ENCODE measurements at regions of chr1 and their contacts with region 1.

Region 1: GRCh38 chr1:205711104-205712020 is 31.1 kb upstream of the SLC45A3 start:
- DNase-seq: peak in 32 of 35 experiments; percentile 12 to 88 (median 48)
- ATAC-seq: peak; percentile 81 to 91 (median 86)
- H3K4me3 ChIP-seq: no peak overlapping the region
- H3K4me3 Mint-ChIP-seq: no peak overlapping the region
- H3K27ac ChIP-seq: no peak overlapping the region
- H3K27ac Mint-ChIP-seq: peak overlapping the region in 1 of 2 donors; percentile 4
- H3K4me1 ChIP-seq: no peaks in the 10 kb centered on the region
- H3K4me1 Mint-ChIP-seq: peaks cover 5 to 17% (median 14%) of the 10 kb centered on the region in 3 donors
- H3K27me3 ChIP-seq: no peaks in the 10 kb centered on the region
- H3K27me3 Mint-ChIP-seq: no peaks in the 10 kb centered on the region

Region 2: DNA sequence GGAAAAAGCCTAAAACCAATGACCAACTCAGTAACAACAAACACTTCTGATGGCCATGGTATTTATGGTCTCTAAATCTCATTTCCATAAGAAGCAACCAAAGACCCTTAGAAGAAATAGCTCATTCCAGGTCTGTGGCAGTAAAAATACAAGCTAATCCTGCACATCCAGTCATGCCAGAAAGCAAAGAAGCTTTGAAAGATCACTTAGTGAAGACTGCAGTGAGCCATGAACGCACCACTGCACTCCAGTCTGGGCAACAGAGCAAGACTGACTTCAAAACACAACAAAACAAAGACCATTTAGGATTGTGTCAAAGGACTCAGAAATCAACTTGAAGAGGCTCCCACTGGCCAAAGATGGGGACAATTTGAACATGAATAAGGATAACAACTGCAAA is 61.1 kb before region 1 on chr1:
- CTCF ChIA-PET with region 1: no interaction called
- POLR2A ChIA-PET with region 1: no interaction called
- DNase-seq: no peak
- ATAC-seq: no peak
- H3K4me3 ChIP-seq: no peak overlapping the region
- H3K4me3 Mint-ChIP-seq: no peak overlapping the region
- H3K27ac ChIP-seq: no peak overlapping the region
- H3K27ac Mint-ChIP-seq: no peak overlapping the region
- H3K4me1 ChIP-seq: no peaks in the 10 kb centered on the region
- H3K4me1 Mint-ChIP-seq: no peaks in the 10 kb centered on the region
- H3K27me3 ChIP-seq: peaks cover 0 to 7% of the 10 kb centered on the region in 2 experiments
- H3K27me3 Mint-ChIP-seq: peaks cover 3 to 4% of the 10 kb centered on the region in 2 donors

Region 3: DNA sequence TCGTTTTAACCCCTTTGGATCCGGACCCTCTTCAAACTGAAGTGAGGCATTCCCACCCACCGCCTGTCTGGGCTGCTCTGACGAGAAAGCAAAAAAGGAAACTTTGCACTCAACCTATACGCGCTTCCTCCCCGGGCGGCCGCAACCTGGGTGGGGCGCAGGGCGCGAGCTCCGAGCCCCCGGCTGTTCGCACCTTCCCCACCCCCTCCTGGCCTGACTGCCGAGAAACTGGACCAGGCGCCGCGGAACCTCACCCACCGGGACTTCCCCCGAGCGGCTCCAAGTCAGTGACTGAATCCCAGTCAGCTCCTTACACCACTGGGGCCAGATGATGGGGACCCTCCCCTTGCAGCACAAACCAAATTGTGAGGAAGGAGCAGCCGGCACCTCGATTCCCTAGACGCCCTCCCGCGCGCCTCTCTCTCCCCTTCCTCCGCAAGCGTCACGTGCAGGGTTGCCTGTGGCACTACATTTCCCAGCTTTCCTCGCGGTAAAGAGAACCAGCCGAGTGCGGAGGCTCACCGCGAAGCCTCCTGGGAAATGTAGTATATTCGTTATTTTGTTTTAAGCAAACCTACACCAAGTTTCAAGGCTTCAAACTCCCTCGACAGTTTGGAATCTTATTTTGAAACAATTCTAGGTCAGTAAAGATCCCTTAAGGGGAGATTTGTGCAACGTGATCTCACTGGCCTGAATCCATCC is 63.8 kb after region 1 on chr1 and contains the start of gene RAB29:
- CTCF ChIA-PET with region 1: interaction called, 3 to 13 read pairs
- POLR2A ChIA-PET with region 1: no interaction called
- DNase-seq: peak; percentile 61 to 93 (median 85)
- ATAC-seq: peak; percentile 91 to 94 (median 92)
- H3K4me3 ChIP-seq: peak within 1 kb of the TSS; percentile 74 to 80
- H3K4me3 Mint-ChIP-seq: peak within 1 kb of the TSS; percentile 84 to 92 (median 85)
- H3K27ac ChIP-seq: peak within 1 kb of the TSS; percentile 93
- H3K27ac Mint-ChIP-seq: peak within 1 kb of the TSS; percentile 95 to 97
- H3K4me1 ChIP-seq: peaks cover 6 to 43% of the 10 kb centered on the region in 2 experiments
- H3K4me1 Mint-ChIP-seq: peaks cover 47 to 66% (median 64%) of the 10 kb centered on the region in 3 donors
- H3K27me3 ChIP-seq: no peaks in the 10 kb centered on the region
- H3K27me3 Mint-ChIP-seq: no peaks in the 10 kb centered on the region
- total RNA-seq, gene RAB29: 32.5 to 64.6 (median 46.8) TPM

Region 4: DNA sequence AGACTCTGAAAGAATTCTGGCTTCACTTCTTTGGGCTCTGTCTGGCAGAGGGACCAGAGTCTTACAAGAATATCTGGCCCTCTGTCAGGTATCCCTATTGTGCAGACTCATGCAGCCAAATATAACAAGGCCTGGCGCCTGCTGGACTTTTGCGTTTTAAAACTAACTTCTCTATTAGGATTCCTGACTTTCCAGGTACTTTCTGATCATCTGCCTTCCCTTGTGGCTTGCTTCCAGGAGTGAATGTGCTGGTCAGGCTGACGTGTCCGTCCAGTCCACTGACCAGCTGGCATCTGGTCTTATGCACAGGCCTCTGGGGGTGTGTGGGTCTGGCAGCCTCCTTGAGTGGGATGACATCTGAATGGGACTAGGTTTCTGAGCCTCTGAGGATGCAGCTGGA is 72.5 kb after region 1 on chr1:
- CTCF ChIA-PET with region 1: interaction called in 1 of 2 experiments, 14 read pairs
- POLR2A ChIA-PET with region 1: no interaction called
- DNase-seq: no peak
- ATAC-seq: no peak
- H3K4me3 ChIP-seq: no peak overlapping the region
- H3K4me3 Mint-ChIP-seq: no peak overlapping the region
- H3K27ac ChIP-seq: no peak overlapping the region
- H3K27ac Mint-ChIP-seq: no peak overlapping the region
- H3K4me1 ChIP-seq: peaks cover 0 to 3% of the 10 kb centered on the region in 2 experiments
- H3K4me1 Mint-ChIP-seq: peaks cover 6 to 9% (median 8%) of the 10 kb centered on the region in 3 donors
- H3K27me3 ChIP-seq: peaks cover 0 to 3% of the 10 kb centered on the region in 2 experiments
- H3K27me3 Mint-ChIP-seq: no peaks in the 10 kb centered on the region

Region 5: GRCh38 chr1:206106328-206107167 is 395.2 kb after region 1 on chr1:
- CTCF ChIA-PET with region 1: no interaction called
- POLR2A ChIA-PET with region 1: no interaction called
- DNase-seq: peak; percentile 40 to 86 (median 66)
- ATAC-seq: peak; percentile 75 to 85 (median 82)
- H3K4me3 ChIP-seq: no peak overlapping the region
- H3K4me3 Mint-ChIP-seq: no peak overlapping the region
- H3K27ac ChIP-seq: no peak overlapping the region
- H3K27ac Mint-ChIP-seq: peak overlapping the region in 1 of 2 donors; percentile 39
- H3K4me1 ChIP-seq: no peaks in the 10 kb centered on the region
- H3K4me1 Mint-ChIP-seq: peaks cover 0 to 12% (median 0%) of the 10 kb centered on the region in 3 donors
- H3K27me3 ChIP-seq: peaks cover 0 to 5% of the 10 kb centered on the region in 2 experiments
- H3K27me3 Mint-ChIP-seq: peaks cover 0 to 5% of the 10 kb centered on the region in 2 donors